ENCODE measurements at regions of chr2 and their contacts with region 1.

Region 1: GRCh38 chr2:48454504-48454903 is 75.5 kb upstream of the STON1 start:
- DNase-seq: peak; percentile 19
- ATAC-seq: no peak
- H3K4me3 ChIP-seq: no peak overlapping the region
- H3K27ac ChIP-seq: no peak overlapping the region
- H3K4me1 ChIP-seq: no peaks in the 10 kb centered on the region
- H3K27me3 ChIP-seq: no peaks in the 10 kb centered on the region
- CTCF ChIP-seq: no peak
- POLR2A ChIP-seq: no peak
- RAD21 ChIP-seq: no peak

Region 2: GRCh38 chr2:48144777-48145176 is 309.7 kb before region 1 on chr2:
- CTCF ChIA-PET with region 1: no interaction called
- POLR2A ChIA-PET with region 1: interaction called, 17 read pairs
- dilution Hi-C with region 1: no loop called
- in situ Hi-C with region 1: no loop called
- intact Hi-C with region 1: no loop called
- DNase-seq: no peak
- ATAC-seq: no peak
- H3K4me3 ChIP-seq: no peak overlapping the region
- H3K27ac ChIP-seq: no peak overlapping the region
- H3K4me1 ChIP-seq: peaks cover 5% of the 10 kb centered on the region
- H3K27me3 ChIP-seq: no peaks in the 10 kb centered on the region
- CTCF ChIP-seq: no peak
- POLR2A ChIP-seq: no peak
- RAD21 ChIP-seq: no peak